Heart left ventricle (tissue), 16 donors: ENCODE measurements at regions of chr16 and their contacts with region 1.

Region 1: GRCh38 chr16:27367461-27368357 is 34.3 kb upstream of the IL21R start:
- DNase-seq: peak; percentile 81 to 88 (median 84)
- ATAC-seq: peak; percentile 77 to 89 (median 86)
- H3K4me3 ChIP-seq: peak overlapping the region in 10 of 12 donors; percentile 1 to 48 (median 30)
- H3K27ac ChIP-seq: peak overlapping the region in 11 of 12 donors; percentile 40 to 91 (median 53)
- H3K4me1 ChIP-seq: peaks cover 0 to 31% (median 12%) of the 10 kb centered on the region in 12 donors
- H3K27me3 ChIP-seq: no peaks in the 10 kb centered on the region
- CTCF ChIP-seq: peak; percentile 72 to 93 (median 86)
- POLR2A ChIP-seq: no peak

Region 2: DNA sequence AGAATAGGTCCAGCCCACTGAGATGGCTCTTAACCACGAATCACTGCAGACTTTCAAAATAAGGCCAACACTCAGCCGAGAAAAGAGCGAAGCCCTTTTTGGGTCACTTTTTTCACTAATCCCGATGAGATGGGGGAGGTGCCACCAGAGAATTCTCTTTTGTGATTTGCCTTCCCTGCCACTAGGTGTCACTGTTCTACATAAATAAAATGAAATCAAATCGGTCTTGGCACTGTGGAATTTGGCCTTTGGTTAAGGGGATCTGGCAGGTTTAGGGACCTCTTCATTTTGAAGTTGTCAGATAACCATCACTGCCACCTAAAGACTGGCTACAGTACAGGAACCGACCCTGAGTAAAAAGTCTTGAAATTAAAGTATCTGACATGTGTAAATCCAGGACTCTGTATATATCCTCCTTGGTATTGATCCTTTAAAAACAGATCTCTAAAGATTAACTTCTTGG is 1529.0 kb before region 1 on chr16:
- intact Hi-C with region 1: loop called in 3 of 10 experiments (anchors 10 kb)
- DNase-seq: peak in 1 of 5 donors; percentile 7
- ATAC-seq: peak in 2 of 4 donors; percentile 31 to 34
- H3K4me3 ChIP-seq: no peak overlapping the region
- H3K27ac ChIP-seq: no peak overlapping the region
- H3K4me1 ChIP-seq: peaks cover 0 to 4% (median 0%) of the 10 kb centered on the region in 12 donors
- H3K27me3 ChIP-seq: peaks cover 0 to 23% (median 0%) of the 10 kb centered on the region in 9 donors
- CTCF ChIP-seq: peak; percentile 65 to 82 (median 74)
- POLR2A ChIP-seq: no peak

Region 3: GRCh38 chr16:27179500-27180072 is 188.1 kb before region 1 on chr16:
- intact Hi-C with region 1: loop called (anchors 1 to 10 kb)
- DNase-seq: peak; percentile 83 to 91 (median 86)
- ATAC-seq: peak; percentile 79 to 98 (median 96)
- H3K4me3 ChIP-seq: no peak overlapping the region
- H3K27ac ChIP-seq: no peak overlapping the region
- H3K4me1 ChIP-seq: peaks cover 0 to 9% (median 0%) of the 10 kb centered on the region in 12 donors
- H3K27me3 ChIP-seq: no peaks in the 10 kb centered on the region
- CTCF ChIP-seq: peak; percentile 85 to 97 (median 93)
- POLR2A ChIP-seq: no peak

Region 4: DNA sequence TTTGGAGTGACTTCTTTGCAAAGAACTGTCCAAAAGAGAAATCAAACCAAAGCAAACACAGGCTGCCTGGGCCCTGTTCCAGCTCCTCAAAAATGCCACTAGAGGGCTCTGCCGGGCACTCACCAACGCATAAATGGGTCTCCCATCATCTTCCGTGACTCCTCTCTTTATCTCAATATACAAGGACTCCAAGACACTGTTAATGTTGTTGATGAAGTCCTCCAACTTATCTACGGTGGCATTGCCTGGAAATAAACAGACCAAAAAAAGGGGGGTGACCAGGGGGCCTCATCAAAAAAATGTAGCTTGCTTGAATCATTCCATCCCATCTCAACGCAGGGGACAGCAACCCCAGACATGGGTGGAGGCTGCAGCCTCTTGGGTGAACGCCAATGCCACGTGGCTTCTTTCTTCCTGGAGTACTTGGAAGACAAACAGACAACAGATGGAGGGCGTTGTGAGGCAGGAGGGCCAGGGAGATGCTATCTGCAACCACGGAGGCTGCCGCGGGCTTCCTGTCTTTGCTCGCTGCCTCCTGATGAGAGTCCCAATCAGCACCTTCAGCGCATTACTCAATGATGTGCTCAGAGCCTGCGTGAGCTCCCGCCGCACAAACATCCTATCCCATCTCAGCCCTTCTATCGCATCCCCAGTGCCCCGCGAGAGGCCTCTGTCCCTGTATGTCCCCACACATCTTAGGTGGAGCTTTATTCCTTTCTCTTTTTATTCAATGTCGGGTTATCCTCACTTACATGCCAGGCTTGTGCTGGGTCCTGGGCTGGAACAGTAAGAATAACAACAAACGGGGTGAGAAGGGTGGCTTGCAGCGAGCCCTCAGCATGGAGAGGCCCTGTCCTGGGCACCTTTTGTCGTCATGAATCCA is 132.4 kb before region 1 on chr16:
- intact Hi-C with region 1: loop called in 9 of 10 experiments (anchors 2 to 5 kb)
- DNase-seq: peak; percentile 88 to 94 (median 91)
- ATAC-seq: peak; percentile 57 to 82 (median 81)
- H3K4me3 ChIP-seq: peak overlapping the region in 7 of 12 donors; percentile 5 to 31 (median 11)
- H3K27ac ChIP-seq: peak overlapping the region; percentile 24 to 91 (median 60)
- H3K4me1 ChIP-seq: peaks cover 0 to 73% (median 35%) of the 10 kb centered on the region in 12 donors
- H3K27me3 ChIP-seq: no peaks in the 10 kb centered on the region
- CTCF ChIP-seq: peak; percentile 67 to 93 (median 82)
- POLR2A ChIP-seq: no peak

Region 5: GRCh38 chr16:27313422-27314160 is 54.1 kb before region 1 on chr16 and contains the start of gene IL4R:
- intact Hi-C with region 1: loop called in 2 of 10 experiments (anchors 5 kb)
- DNase-seq: peak; percentile 78 to 89 (median 85)
- ATAC-seq: peak; percentile 21 to 62 (median 48)
- H3K4me3 ChIP-seq: peak within 1 kb of the TSS; percentile 63 to 99 (median 86)
- H3K27ac ChIP-seq: peak within 1 kb of the TSS; percentile 89 to 99 (median 96)
- H3K4me1 ChIP-seq: peaks cover 4 to 53% (median 29%) of the 10 kb centered on the region in 12 donors
- H3K27me3 ChIP-seq: peaks cover 0 to 6% (median 0%) of the 10 kb centered on the region in 9 donors
- CTCF ChIP-seq: no peak
- POLR2A ChIP-seq: peak in 1 of 2 donors; percentile 53
- total RNA-seq, gene IL4R: 6.7 to 47.4 (median 8.2) TPM